ENCODE measurements at regions of chr1 and their contacts with region 1.

Region 1: GRCh38 chr1:12067900-12068821 is 5.1 kb downstream of the TNFRSF8 start:
- DNase-seq: peak; percentile 63
- ATAC-seq: peak; percentile 76
- H3K4me3 Mint-ChIP-seq: peak overlapping the region; percentile 51
- H3K27ac Mint-ChIP-seq: peak overlapping the region; percentile 96
- H3K4me1 Mint-ChIP-seq: peaks cover 57% of the 10 kb centered on the region
- H3K27me3 Mint-ChIP-seq: peaks cover 12% of the 10 kb centered on the region
- CTCF ChIP-seq: no peak

Region 2: GRCh38 chr1:12052008-12052573 is 16.1 kb before region 1 on chr1:
- CTCF ChIA-PET with region 1: interaction called, 10 read pairs
- POLR2A ChIA-PET with region 1: no interaction called
- DNase-seq: no peak
- ATAC-seq: peak; percentile 26; the same call in 1 of the 2 replicates
- H3K4me3 Mint-ChIP-seq: no peak overlapping the region
- H3K27ac Mint-ChIP-seq: peak overlapping the region; percentile 2; the same call in 1 of the 2 replicates
- H3K4me1 Mint-ChIP-seq: peaks cover 17% of the 10 kb centered on the region
- H3K27me3 Mint-ChIP-seq: no peaks in the 10 kb centered on the region
- CTCF ChIP-seq: no peak

Measured in WTC11 (cell line).